MCF 10A (cell line): ENCODE measurements at regions of chrX and their contacts with region 1.

Region 1: DNA sequence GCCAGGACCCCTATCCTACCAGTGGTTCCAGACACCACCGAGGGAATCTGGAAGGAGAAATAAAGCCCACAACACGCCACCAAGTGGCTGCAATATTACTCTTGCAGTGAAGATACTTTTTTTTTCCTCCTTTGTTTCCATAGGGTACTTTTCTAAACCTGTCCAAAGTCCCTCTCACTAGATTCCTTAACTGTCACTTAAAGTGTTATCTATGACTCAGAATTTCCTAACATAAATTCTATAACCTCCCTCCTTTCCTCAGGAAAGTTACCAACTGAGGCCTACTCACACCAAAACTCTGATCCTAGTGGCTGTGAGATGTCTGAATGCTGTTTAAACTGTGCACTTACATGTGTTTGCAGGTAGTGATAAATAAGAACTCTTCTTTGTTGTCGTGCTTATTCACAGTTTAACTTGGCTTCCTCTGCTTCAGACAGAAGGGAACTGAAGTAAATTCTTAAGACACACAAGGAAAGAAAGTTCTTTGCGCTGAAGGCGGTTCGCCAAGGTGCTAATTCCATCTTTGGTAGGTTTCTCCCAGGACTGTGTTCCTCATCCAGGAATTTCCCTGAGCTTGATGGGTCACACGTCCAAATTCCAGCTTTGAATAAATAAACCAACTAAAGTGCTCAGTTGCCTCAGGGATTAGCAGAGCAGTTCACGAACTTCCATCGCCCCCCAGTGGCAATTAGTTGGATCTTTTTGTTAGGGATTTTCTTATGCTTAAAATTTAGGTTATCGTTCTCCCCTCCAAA is 10.7 kb upstream of the HCCS start:
- DNase-seq: peak; percentile 72
- H3K4me3 Mint-ChIP-seq: no peak overlapping the region
- H3K27ac Mint-ChIP-seq: peak overlapping the region; percentile 44
- H3K4me1 Mint-ChIP-seq: no peaks in the 10 kb centered on the region
- H3K27me3 Mint-ChIP-seq: no peaks in the 10 kb centered on the region
- CTCF ChIP-seq: peak; percentile 51

Region 2: DNA sequence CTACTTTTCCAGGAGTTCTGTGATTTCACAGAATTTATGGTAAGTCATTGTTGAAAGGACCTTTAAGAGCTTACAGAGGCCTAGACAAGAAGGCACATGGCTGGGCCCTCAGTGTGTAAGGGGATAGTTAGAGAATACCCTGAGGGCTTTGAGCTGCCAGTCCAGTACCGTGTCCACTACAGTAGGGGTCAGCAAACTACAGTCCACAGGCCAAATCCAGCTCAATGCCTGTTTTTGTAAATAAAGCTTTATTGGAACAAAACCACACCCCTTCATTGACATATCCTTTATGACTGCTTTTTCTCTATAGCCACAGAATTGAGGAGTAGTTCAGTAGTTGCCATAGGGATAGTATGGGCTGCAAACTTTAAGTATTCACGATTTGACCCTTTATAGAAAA is 656.3 kb before region 1 on chrX:
- CTCF ChIA-PET with region 1: no interaction called
- POLR2A ChIA-PET with region 1: no interaction called
- intact Hi-C with region 1: no loop called
- DNase-seq: no peak
- H3K4me3 Mint-ChIP-seq: no peak overlapping the region
- H3K27ac Mint-ChIP-seq: no peak overlapping the region
- H3K4me1 Mint-ChIP-seq: peaks cover 8% of the 10 kb centered on the region
- H3K27me3 Mint-ChIP-seq: no peaks in the 10 kb centered on the region
- CTCF ChIP-seq: peak; percentile 14

Region 3: GRCh38 chrX:10636337-10636736 is 464.1 kb before region 1 on chrX:
- CTCF ChIA-PET with region 1: no interaction called
- POLR2A ChIA-PET with region 1: no interaction called
- intact Hi-C with region 1: loop called (anchors 2 kb)
- DNase-seq: peak; percentile 72
- H3K4me3 Mint-ChIP-seq: peak overlapping the region; percentile 52
- H3K27ac Mint-ChIP-seq: no peak overlapping the region
- H3K4me1 Mint-ChIP-seq: peaks cover 33% of the 10 kb centered on the region
- H3K27me3 Mint-ChIP-seq: peaks cover 20% of the 10 kb centered on the region
- CTCF ChIP-seq: peak; percentile 79

Region 4: DNA sequence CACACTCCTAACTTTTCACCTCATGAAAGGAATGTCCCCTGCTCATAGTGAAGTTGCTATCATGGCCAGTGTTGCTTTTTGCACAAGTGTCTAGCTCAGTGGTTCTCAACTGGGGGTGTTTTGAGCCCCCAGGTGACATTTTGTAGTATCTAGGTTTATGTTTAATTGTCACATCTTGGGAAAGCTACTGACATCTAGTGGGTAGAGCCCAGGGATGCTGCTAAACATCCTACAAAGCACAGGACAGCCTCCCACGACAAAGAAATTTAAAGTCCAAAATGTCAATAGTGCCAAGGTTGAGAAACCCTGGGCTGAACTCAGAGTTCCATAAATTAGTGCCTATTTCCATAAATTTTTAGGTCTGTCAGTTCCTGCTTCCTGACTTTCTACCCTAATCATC is 60.1 kb before region 1 on chrX:
- CTCF ChIA-PET with region 1: no interaction called
- POLR2A ChIA-PET with region 1: no interaction called
- intact Hi-C with region 1: no loop called
- DNase-seq: no peak
- H3K4me3 Mint-ChIP-seq: no peak overlapping the region
- H3K27ac Mint-ChIP-seq: no peak overlapping the region
- H3K4me1 Mint-ChIP-seq: no peaks in the 10 kb centered on the region
- H3K27me3 Mint-ChIP-seq: no peaks in the 10 kb centered on the region
- CTCF ChIP-seq: no peak

Region 5: GRCh38 chrX:11113731-11114130 is 13.3 kb after region 1 on chrX:
- CTCF ChIA-PET with region 1: interaction called, 13 read pairs
- POLR2A ChIA-PET with region 1: interaction called, 3 read pairs
- intact Hi-C with region 1: no loop called
- DNase-seq: no peak
- H3K4me3 Mint-ChIP-seq: peak overlapping the region; percentile 28
- H3K27ac Mint-ChIP-seq: peak overlapping the region; percentile 73
- H3K4me1 Mint-ChIP-seq: no peaks in the 10 kb centered on the region
- H3K27me3 Mint-ChIP-seq: no peaks in the 10 kb centered on the region
- CTCF ChIP-seq: no peak